ENCODE measurements at regions of chr16 and their contacts with region 1.

Region 1: DNA sequence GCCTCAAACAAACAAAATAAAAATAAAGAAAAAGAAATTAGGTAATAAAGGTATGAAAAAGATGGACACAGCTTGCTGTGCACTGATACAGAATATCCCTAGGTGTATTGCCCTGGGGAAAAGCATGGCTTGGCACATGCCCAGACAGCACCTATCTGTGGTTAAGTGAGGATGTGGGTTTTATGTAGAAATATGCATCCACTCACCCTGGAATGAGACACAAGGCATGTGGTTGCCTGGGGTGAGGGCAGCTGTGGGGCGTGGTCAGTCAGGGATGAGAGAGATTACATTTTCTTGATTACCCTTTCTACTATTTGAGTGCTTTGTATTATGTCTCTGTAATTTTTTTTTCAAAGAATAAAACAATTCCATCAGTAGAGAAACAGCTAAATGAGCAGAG is 6.9 kb downstream of the PLLP start:
- DNase-seq: peak; percentile 73 to 87 (median 76)
- H3K4me3 ChIP-seq: no peak overlapping the region
- H3K4me3 Mint-ChIP-seq: peak overlapping the region; percentile 71 to 87 (median 77)
- H3K27ac ChIP-seq: no peak overlapping the region
- H3K27ac Mint-ChIP-seq: peak overlapping the region; percentile 75 to 90 (median 84)
- H3K4me1 ChIP-seq: peaks cover 44% of the 10 kb centered on the region
- H3K4me1 Mint-ChIP-seq: peaks cover 29 to 44% (median 36%) of the 10 kb centered on the region in 4 donors
- H3K27me3 ChIP-seq: no peaks in the 10 kb centered on the region
- H3K27me3 Mint-ChIP-seq: no peaks in the 10 kb centered on the region

Region 2: GRCh38 chr16:57265850-57266530 is 11.6 kb before region 1 on chr16:
- CTCF ChIA-PET with region 1: no interaction called
- POLR2A ChIA-PET with region 1: interaction called, 6 read pairs
- intact Hi-C with region 1: loop called (anchors 2 kb)
- DNase-seq: no peak
- H3K4me3 ChIP-seq: no peak overlapping the region
- H3K4me3 Mint-ChIP-seq: peak overlapping the region; percentile 0 to 69 (median 24)
- H3K27ac ChIP-seq: peak overlapping the region; percentile 34
- H3K27ac Mint-ChIP-seq: peak overlapping the region; percentile 72 to 95 (median 86)
- H3K4me1 ChIP-seq: peaks cover 44% of the 10 kb centered on the region
- H3K4me1 Mint-ChIP-seq: peaks cover 20 to 42% (median 25%) of the 10 kb centered on the region in 4 donors
- H3K27me3 ChIP-seq: no peaks in the 10 kb centered on the region
- H3K27me3 Mint-ChIP-seq: no peaks in the 10 kb centered on the region

Region 3: DNA sequence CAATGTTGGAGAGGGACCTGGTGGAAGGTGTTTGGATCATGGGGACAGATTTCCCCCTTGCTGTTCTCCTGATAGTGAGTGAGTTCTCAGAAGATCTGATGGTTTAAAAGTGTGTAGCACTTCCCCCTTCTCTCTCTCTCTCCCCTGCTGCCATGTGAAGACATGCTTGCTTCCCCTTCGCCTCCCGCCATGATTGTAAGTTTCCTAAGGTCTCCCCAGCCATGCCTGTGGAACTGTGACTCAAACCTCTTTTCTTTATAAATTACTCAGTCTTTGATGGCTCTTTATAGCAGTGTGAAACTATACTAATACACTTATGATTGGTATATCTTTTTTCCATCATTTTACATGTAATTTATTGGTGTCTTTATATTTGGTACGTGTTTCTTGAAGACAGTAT is 278.2 kb after region 1 on chr16:
- CTCF ChIA-PET with region 1: no interaction called
- POLR2A ChIA-PET with region 1: no interaction called
- intact Hi-C with region 1: no loop called
- DNase-seq: no peak
- H3K4me3 ChIP-seq: no peak overlapping the region
- H3K4me3 Mint-ChIP-seq: no peak overlapping the region
- H3K27ac ChIP-seq: no peak overlapping the region
- H3K27ac Mint-ChIP-seq: no peak overlapping the region
- H3K4me1 ChIP-seq: no peaks in the 10 kb centered on the region
- H3K4me1 Mint-ChIP-seq: peaks cover 0 to 15% (median 12%) of the 10 kb centered on the region in 4 donors
- H3K27me3 ChIP-seq: no peaks in the 10 kb centered on the region
- H3K27me3 Mint-ChIP-seq: no peaks in the 10 kb centered on the region

Measured in CD4-positive, alpha-beta memory T cell (primary cell).